PC-3 (cell line): ENCODE measurements at regions of chr1 and their contacts with region 1.

Region 1: DNA sequence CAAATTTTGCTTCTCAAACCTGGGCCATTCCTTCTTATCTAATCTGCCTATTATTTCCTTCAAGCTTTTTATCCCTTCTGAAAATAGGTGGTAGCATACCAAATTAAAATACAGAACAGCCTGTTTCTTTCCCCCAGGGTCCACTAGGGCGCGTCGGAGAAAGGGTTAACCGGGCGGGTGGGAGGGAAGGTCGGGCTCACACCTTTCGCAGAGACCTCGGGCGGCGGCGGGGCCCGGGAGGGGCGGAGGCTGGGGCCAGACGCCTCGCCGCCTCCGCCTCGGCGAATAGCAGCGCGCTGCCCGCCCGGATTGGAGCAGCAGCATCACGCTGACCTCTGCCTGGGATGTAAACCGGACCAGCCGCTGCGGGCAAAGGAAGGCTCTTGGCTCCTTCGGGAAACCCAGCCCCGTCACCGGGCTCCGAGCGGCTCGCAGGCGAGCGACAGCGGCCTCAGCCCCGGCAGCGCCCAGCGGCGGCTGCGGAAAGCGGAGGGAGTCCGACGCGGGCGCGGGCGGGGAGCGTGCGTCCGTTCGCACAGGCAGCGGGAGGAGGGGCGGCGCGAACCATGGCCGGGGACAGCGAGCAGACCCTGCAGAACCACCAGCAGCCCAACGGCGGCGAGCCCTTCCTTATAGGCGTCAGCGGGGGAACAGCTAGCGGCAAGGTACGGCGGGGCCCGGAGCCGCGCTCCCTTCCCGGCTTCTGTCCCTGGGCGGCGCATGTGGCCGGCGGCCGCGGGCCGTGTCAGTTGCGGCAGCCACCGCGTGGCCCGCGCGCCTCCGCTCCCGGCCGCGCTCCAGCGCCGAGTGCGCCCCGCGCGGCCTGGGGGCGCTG is at the start of gene UCK2:
- DNase-seq: peak; percentile 89
- ATAC-seq: peak; percentile 82
- H3K4me3 ChIP-seq: peak within 1 kb of the TSS; percentile 88
- H3K27ac ChIP-seq: peak within 1 kb of the TSS; percentile 76
- H3K4me1 ChIP-seq: peaks cover 16% of the 10 kb centered on the region
- H3K27me3 ChIP-seq: no peaks in the 10 kb centered on the region
- CTCF ChIP-seq: no peak; the same call in 1 of the 2 replicates
- total RNA-seq, gene UCK2: 193 and 209 TPM in 2 replicates

Region 2: DNA sequence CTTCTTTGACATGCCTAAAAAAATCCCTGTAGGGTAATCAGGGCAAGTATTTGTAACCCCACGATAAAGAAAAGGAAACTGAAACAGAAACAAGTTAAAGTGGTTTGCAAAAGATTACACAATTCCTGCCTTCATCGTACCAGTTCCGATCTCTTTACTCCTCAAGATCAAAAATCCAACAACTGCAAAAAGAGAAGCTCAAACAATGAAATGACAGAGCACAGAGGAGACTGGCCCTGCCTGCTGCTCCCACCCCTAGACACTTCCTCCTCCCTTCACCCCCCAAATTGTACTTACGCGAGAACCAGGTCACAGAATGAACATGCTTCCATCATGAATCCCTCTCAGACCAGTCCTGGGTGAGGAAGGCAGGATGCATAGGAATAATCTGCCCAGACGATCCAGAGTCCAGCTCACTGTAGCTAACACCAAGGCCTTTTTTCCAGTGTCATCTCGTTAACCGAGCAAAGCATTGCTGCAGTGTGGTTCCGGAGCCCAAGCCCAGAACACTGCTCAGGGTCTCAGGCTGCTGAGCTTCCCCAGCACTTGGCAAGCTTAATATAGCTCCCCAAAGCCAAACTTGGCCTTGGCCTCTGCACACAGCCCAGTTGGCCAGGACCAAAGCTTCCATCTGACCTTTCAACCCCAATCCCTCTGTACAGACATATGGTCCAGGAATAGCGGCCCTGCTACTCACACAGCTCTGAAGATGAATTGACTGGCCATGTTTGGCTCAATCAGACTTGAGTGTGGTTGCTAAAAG is 402.9 kb before region 1 on chr1:
- CTCF ChIA-PET with region 1: no interaction called
- POLR2A ChIA-PET with region 1: no interaction called
- intact Hi-C with region 1: no loop called
- DNase-seq: no peak
- ATAC-seq: no peak
- H3K4me3 ChIP-seq: no peak overlapping the region
- H3K27ac ChIP-seq: no peak overlapping the region
- H3K4me1 ChIP-seq: no peaks in the 10 kb centered on the region
- H3K27me3 ChIP-seq: peaks cover 49% of the 10 kb centered on the region
- CTCF ChIP-seq: no peak

Region 3: DNA sequence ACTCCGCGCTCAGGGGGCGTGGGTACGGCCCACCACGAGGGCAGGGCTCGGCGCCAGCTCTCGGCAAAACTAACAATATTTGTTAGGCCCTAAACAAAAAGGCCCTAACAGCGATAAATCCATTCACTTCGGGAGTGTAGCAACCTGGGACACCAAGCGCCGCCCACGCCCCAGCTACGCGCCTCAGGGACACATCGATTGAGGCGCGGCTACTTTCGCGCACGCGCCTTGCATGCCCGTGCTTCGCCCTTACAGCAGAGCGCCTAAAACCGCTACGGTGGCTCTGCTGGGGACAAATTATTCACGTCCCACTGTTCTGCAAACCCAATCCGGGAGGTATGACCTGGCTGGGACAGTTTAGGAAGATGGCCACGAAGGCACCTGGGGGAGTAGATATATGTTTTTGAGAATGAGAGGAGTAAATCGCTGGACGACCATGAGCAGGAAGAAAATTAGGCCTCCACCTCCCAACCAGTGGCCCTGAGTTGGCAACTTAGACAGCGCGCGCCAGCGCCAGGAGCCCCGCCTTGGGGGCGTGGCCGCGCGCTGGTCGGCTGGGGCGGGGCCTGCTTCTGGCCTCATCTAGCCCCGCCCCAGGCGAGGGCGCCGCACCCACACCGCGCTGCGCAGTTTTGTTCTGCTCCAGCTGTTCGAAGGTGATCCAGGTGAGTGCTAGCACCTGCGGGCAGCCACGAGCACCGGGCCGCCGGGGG is 196.7 kb before region 1 on chr1 and contains the start of gene MGST3:
- CTCF ChIA-PET with region 1: no interaction called
- POLR2A ChIA-PET with region 1: interaction called, 16 read pairs
- intact Hi-C with region 1: loop called (anchors 10 kb)
- DNase-seq: peak; percentile 97
- ATAC-seq: peak; percentile 81
- H3K4me3 ChIP-seq: peak within 1 kb of the TSS; percentile 90
- H3K27ac ChIP-seq: peak within 1 kb of the TSS; percentile 84
- H3K4me1 ChIP-seq: peaks cover 36% of the 10 kb centered on the region
- H3K27me3 ChIP-seq: no peaks in the 10 kb centered on the region
- CTCF ChIP-seq: no peak
- total RNA-seq, gene MGST3: 117 and 168 TPM in 2 replicates

Region 4: DNA sequence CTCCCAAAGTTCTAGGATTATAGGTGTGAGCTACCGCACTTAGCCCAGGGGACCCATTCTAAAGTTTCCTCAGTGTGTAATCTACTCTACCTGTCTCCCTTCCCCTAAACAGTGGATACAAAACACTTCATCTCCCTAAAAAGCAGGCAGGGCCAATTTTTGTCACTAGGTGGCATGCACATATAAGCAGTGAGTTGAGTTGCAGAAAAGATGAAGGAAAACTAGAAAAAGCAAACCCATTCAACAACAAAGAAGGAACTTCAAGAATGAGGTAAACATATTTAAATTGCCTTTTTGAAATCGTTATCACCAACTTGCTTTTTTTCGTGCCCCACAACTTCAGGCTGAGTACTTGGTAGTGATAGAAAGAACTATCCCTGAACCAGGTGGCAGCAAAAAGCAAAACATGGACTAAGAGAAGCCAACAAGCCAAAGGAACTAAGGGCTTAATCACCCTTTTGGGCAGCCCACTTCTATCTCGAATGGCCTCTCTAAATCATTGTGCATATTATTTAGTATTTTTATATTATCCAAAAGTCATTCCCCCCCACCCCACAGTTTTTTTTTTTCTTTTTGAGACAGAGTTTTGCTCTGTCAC is 109.5 kb before region 1 on chr1:
- CTCF ChIA-PET with region 1: no interaction called
- POLR2A ChIA-PET with region 1: no interaction called
- intact Hi-C with region 1: loop called (anchors 2 kb)
- DNase-seq: peak; percentile 82
- ATAC-seq: peak; percentile 92
- H3K4me3 ChIP-seq: no peak overlapping the region
- H3K27ac ChIP-seq: no peak overlapping the region
- H3K4me1 ChIP-seq: no peaks in the 10 kb centered on the region
- H3K27me3 ChIP-seq: no peaks in the 10 kb centered on the region
- CTCF ChIP-seq: peak; percentile 94

Region 5: DNA sequence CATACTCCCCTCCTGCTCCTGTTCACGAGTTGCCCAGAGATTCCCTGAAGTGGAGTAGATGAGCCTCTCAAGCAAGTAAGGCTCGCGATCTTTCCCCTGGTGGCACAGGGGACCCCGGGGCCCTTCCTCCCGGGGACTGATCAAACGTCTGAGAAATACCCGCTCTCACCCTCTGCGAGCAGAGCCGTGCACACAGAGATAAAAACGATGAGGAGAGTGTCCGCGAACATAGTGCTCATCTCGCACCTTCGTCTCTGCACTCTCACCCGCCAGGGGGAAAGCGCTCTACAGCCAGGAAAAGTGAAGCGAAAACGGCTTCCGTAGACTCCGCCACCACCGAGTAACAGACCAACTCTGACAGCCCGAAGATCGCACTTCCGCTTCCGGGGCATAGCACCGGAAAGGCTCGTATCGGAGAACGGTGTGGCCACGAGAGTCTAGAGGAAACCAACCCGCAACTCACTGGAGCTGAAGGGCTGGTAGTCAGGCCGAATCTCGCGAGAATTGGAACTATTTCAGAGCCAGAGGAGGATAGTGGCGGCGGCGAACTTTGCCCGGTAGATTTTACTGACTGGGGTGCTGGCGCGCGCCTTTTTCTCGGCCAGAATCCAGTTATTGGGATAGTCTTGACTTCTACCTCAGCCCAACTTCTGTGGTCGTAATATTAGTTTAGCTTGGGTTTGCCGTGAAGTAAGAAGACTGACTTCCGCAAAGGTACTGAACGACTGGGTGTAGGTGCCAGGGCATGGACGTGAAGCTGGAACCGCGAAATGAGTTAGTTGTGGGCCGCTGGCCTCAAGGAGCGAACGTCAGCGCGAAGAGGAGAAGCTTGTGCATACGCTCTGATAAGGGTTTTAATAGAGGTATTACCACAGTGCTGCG is 58.7 kb before region 1 on chr1 and contains the start of gene TMCO1:
- CTCF ChIA-PET with region 1: no interaction called
- POLR2A ChIA-PET with region 1: interaction called, 3 read pairs
- intact Hi-C with region 1: loop called (anchors 1 kb)
- DNase-seq: peak; percentile 99
- ATAC-seq: peak; percentile 97
- H3K4me3 ChIP-seq: peak within 1 kb of the TSS; percentile 91
- H3K27ac ChIP-seq: peak within 1 kb of the TSS; percentile 77
- H3K4me1 ChIP-seq: peaks cover 39% of the 10 kb centered on the region
- H3K27me3 ChIP-seq: no peaks in the 10 kb centered on the region
- CTCF ChIP-seq: no peak
- total RNA-seq, gene TMCO1: 63.7 and 80.6 TPM in 2 replicates

Region 6: DNA sequence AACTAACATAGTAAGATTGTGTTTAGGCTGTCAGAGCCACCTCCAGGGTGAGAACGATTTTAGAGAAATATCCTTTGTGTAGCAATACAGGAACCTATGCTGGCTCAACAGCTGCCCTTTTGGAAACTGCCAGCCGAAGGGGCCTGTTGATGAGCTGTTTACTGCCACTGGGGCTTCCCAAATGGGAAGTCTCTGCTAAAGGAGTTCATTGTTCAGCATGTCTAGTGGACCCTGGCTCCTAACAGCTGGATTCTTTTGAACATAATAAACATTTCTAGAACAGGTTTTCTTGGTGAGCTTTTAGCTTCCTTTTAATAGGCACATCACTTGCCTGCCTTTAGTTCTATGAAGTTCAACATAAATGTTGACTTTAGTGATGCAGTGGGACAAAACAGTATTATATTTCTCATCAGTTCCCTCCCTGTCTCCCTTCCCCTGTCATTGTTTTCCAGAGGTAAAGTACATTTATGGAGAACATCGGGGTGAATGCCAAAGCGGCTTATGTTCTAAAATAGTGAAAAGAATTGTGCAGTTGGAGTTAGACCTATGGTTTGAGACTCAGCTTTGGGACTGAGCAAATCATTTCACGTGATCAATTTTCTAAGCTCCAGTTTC is 57.3 kb after region 1 on chr1:
- CTCF ChIA-PET with region 1: no interaction called
- POLR2A ChIA-PET with region 1: no interaction called
- intact Hi-C with region 1: loop called (anchors 5 kb)
- DNase-seq: no peak
- ATAC-seq: no peak
- H3K4me3 ChIP-seq: no peak overlapping the region
- H3K27ac ChIP-seq: no peak overlapping the region
- H3K4me1 ChIP-seq: peaks cover 31% of the 10 kb centered on the region
- H3K27me3 ChIP-seq: no peaks in the 10 kb centered on the region
- CTCF ChIP-seq: no peak

Region 7: DNA sequence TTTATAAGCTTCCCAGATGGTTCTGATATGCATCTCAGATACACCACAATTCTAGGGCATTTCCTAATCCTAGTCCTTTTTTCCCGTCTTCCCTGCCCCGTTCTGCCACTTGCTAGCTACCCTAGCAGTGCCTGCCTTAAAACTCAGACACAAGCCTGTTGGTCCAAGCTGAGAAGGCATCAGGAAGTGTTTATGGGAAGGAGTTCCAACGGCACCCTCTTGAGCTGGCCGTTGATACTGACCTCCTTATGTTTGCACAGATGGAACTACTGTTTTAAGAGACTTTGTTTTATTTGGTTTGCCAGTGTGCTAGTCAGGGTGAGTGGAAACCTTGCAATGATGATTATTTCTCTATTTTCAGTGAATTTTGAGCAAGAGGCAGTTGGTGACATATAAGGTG is 67.1 kb after region 1 on chr1:
- CTCF ChIA-PET with region 1: no interaction called
- POLR2A ChIA-PET with region 1: interaction called, 17 read pairs
- intact Hi-C with region 1: no loop called
- DNase-seq: peak; percentile 16
- ATAC-seq: peak; percentile 29; the same call in 1 of the 2 replicates
- H3K4me3 ChIP-seq: no peak overlapping the region
- H3K27ac ChIP-seq: no peak overlapping the region
- H3K4me1 ChIP-seq: peaks cover 16% of the 10 kb centered on the region
- H3K27me3 ChIP-seq: no peaks in the 10 kb centered on the region
- CTCF ChIP-seq: no peak; the same call in 1 of the 2 replicates

Region 8: DNA sequence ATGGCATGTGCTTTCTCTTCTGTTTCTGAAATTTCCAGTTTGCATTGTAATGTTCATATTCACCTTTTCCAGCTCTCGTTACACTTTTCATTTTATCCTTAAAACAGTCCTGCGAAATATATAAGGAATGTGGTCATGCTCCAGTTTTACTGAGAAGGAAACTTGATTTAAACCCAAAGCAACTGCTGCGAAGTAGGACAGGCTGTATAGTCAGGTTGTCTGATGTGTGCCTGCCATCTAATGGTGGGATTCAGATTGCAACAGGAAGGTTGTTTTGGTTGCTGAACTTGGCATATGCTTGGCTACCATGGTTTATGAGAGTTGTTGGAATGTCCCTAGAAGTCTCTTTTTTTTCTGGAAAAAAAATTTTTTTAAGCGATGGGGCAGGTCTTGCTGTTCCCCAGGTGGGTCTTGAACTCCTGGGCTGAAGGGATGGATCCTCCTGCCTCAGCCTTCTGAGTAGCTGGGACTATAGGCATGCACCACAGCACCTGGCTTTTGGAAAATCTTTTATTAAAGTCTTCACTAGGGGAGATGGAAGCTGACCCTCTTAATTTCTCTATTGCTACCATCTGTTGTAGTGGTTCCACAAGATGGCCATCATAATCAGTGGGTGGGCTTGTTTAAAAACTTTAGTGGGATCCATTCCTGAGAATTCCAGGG is 86.8 kb after region 1 on chr1:
- CTCF ChIA-PET with region 1: no interaction called
- POLR2A ChIA-PET with region 1: no interaction called
- intact Hi-C with region 1: loop called (anchors 1 kb)
- DNase-seq: peak; percentile 91
- ATAC-seq: peak; percentile 88
- H3K4me3 ChIP-seq: no peak overlapping the region
- H3K27ac ChIP-seq: no peak overlapping the region
- H3K4me1 ChIP-seq: no peaks in the 10 kb centered on the region
- H3K27me3 ChIP-seq: no peaks in the 10 kb centered on the region
- CTCF ChIP-seq: peak; percentile 98